Mammary epithelial cell (primary cell): ENCODE measurements at regions of chr10 and their contacts with region 1.

Region 1: GRCh38 chr10:77943121-77943901 is 16.8 kb upstream of the DLG5 start:
- DNase-seq: peak; percentile 81
- H3K4me3 ChIP-seq: no peak overlapping the region
- H3K27ac ChIP-seq: peak overlapping the region; percentile 65
- H3K4me1 ChIP-seq: peaks cover 26% of the 10 kb centered on the region
- H3K27me3 ChIP-seq: no peaks in the 10 kb centered on the region
- CTCF ChIP-seq: no peak

Region 2: GRCh38 chr10:77862595-77862994 is 80.7 kb before region 1 on chr10:
- CTCF ChIA-PET with region 1: interaction called, 3 read pairs
- dilution Hi-C with region 1: loop called (anchors 5 kb)
- in situ Hi-C with region 1: no loop called
- intact Hi-C with region 1: no loop called
- DNase-seq: no peak
- H3K4me3 ChIP-seq: no peak overlapping the region
- H3K27ac ChIP-seq: no peak overlapping the region
- H3K4me1 ChIP-seq: peaks cover 22% of the 10 kb centered on the region
- H3K27me3 ChIP-seq: no peaks in the 10 kb centered on the region
- CTCF ChIP-seq: no peak

Region 3: GRCh38 chr10:77889277-77889903 is 53.9 kb before region 1 on chr10:
- CTCF ChIA-PET with region 1: no interaction called
- dilution Hi-C with region 1: loop called (anchors 5 kb)
- in situ Hi-C with region 1: no loop called
- intact Hi-C with region 1: no loop called
- DNase-seq: peak; percentile 72
- H3K4me3 ChIP-seq: no peak overlapping the region
- H3K27ac ChIP-seq: peak overlapping the region; percentile 7
- H3K4me1 ChIP-seq: peaks cover 42% of the 10 kb centered on the region
- H3K27me3 ChIP-seq: no peaks in the 10 kb centered on the region
- CTCF ChIP-seq: no peak

Region 4: GRCh38 chr10:77926566-77927401 is 16.5 kb before region 1 on chr10 and contains the start of gene DLG5:
- CTCF ChIA-PET with region 1: no interaction called
- dilution Hi-C with region 1: no loop called
- in situ Hi-C with region 1: no loop called
- intact Hi-C with region 1: loop called (anchors 1 kb)
- DNase-seq: peak; percentile 42
- H3K4me3 ChIP-seq: peak within 1 kb of the TSS; percentile 71 to 87 (median 76)
- H3K27ac ChIP-seq: peak within 1 kb of the TSS; percentile 40
- H3K4me1 ChIP-seq: peaks cover 34% of the 10 kb centered on the region
- H3K27me3 ChIP-seq: no peaks in the 10 kb centered on the region
- CTCF ChIP-seq: no peak
- total RNA-seq, gene DLG5: 40.8 to 76.5 TPM

Region 5: GRCh38 chr10:77932016-77932715 is 11.1 kb before region 1 on chr10:
- CTCF ChIA-PET with region 1: no interaction called
- dilution Hi-C with region 1: no loop called
- in situ Hi-C with region 1: no loop called
- intact Hi-C with region 1: loop called (anchors 1 kb)
- DNase-seq: peak; percentile 52
- H3K4me3 ChIP-seq: no peak overlapping the region
- H3K27ac ChIP-seq: no peak overlapping the region
- H3K4me1 ChIP-seq: peaks cover 15% of the 10 kb centered on the region
- H3K27me3 ChIP-seq: no peaks in the 10 kb centered on the region
- CTCF ChIP-seq: no peak

Region 6: DNA sequence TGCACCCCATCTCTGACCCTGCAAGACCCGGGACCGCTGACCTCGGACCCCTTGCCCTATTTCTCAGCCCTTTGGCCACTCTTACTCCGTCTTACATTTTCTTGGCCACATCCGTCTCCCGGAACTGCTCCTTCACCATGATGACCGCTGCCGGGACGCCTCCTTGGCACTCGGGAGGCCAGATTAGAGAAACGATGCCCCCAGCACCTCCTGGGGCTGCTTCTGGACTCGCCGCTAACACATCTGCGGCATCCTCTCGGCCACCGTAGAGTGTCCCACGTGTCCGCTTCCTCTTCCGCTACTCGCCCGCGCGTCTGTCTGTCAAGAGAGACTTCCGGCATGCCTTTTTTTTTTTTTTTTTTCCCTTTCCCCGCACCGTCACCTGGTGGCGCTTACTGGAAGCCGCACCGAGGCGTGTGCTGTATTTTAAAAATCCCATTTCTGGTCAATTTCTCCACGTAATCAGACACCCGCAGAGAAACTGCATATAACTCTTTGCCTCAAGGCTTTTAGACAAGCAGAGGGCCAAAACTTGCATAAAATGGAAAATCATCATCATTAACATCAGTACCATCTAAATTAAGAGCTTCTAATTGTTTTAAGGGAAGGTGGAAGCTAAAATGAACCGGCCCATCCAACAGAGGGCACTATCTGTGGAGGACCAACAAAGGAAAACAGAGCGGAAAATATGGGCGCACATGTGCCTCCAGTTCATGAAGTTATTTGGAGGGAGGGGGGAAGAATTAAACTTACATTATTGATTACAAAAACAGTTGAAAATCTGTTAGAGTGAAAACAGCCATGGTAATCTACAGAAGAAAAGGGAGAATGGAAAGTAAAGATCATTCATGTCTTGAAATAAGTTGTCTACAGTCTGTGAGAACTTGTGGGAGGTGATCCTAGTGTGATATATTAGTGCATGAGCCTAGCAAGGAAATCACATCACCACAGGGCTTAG is 86.2 kb after region 1 on chr10 and contains the start of gene POLR3A:
- CTCF ChIA-PET with region 1: no interaction called
- dilution Hi-C with region 1: loop called (anchors 5 kb)
- in situ Hi-C with region 1: no loop called
- intact Hi-C with region 1: loop called (anchors 5 kb)
- DNase-seq: peak; percentile 96
- H3K4me3 ChIP-seq: peak within 1 kb of the TSS; percentile 87 to 94 (median 87)
- H3K27ac ChIP-seq: peak within 1 kb of the TSS; percentile 74
- H3K4me1 ChIP-seq: peaks cover 38% of the 10 kb centered on the region
- H3K27me3 ChIP-seq: no peaks in the 10 kb centered on the region
- CTCF ChIP-seq: peak; percentile 53 to 72
- total RNA-seq, gene POLR3A: 20.8 to 21.2 TPM

Region 7: DNA sequence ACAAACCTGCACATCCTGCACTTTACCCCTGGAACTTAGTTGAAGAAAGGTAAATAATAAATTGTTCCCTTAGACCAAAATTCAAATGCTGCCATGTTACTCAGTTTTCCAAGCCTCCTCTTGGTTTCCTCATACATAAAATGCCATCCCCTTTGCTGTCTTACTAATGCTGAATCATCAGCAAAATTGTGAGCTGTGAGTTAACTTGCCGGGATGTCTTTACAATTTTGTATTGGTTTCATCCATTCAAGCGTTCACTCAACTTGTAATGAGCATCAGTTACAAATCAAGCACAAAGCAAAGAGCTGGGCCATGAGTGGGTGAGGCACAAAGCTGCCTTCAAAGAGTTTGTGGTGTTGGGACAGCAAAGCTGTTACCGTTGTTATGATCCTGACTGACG is 729.6 kb after region 1 on chr10:
- CTCF ChIA-PET with region 1: no interaction called
- dilution Hi-C with region 1: no loop called
- in situ Hi-C with region 1: no loop called
- intact Hi-C with region 1: no loop called
- DNase-seq: peak; percentile 14
- H3K4me3 ChIP-seq: no peak overlapping the region
- H3K27ac ChIP-seq: no peak overlapping the region
- H3K4me1 ChIP-seq: no peaks in the 10 kb centered on the region
- H3K27me3 ChIP-seq: peaks cover 4% of the 10 kb centered on the region
- CTCF ChIP-seq: no peak